ENCODE measurements at regions of chr13 and their contacts with region 1.

Region 1: DNA sequence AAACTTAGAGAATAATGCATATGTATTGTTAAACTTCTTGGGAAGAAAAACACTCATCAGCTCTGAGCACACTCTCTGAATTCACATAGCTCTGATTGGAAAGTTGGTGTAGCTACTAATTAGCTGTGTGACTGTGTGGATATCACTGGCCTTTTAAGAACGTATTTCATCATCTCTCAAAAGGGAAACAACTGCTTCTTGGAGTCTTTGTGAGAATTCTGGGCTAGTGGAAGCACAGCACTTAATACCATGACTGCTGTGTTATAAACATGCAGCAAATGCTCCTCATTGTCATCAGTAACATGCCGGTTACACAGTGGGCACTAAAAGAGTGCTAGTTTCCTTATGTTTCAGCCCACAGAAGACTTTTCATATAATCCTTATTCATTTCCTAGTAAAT is 220.9 kb upstream of the CSNK1A1L start:
- DNase-seq: no peak
- H3K4me3 ChIP-seq: no peak overlapping the region
- H3K27ac ChIP-seq: no peak overlapping the region
- H3K4me1 ChIP-seq: no peaks in the 10 kb centered on the region
- H3K27me3 ChIP-seq: no peaks in the 10 kb centered on the region
- CTCF ChIP-seq: no peak
- POLR2A ChIP-seq: no peak

Region 2: GRCh38 chr13:36362251-36362650 is 964.1 kb before region 1 on chr13:
- intact Hi-C with region 1: loop called (anchors 10 kb)
- DNase-seq: no peak
- H3K4me3 ChIP-seq: no peak overlapping the region
- H3K27ac ChIP-seq: no peak overlapping the region
- H3K4me1 ChIP-seq: no peaks in the 10 kb centered on the region
- H3K27me3 ChIP-seq: no peaks in the 10 kb centered on the region
- CTCF ChIP-seq: no peak
- POLR2A ChIP-seq: no peak